HEK293T (cell line): ENCODE measurements at regions of chr11 and their contacts with region 1.

Region 1: DNA sequence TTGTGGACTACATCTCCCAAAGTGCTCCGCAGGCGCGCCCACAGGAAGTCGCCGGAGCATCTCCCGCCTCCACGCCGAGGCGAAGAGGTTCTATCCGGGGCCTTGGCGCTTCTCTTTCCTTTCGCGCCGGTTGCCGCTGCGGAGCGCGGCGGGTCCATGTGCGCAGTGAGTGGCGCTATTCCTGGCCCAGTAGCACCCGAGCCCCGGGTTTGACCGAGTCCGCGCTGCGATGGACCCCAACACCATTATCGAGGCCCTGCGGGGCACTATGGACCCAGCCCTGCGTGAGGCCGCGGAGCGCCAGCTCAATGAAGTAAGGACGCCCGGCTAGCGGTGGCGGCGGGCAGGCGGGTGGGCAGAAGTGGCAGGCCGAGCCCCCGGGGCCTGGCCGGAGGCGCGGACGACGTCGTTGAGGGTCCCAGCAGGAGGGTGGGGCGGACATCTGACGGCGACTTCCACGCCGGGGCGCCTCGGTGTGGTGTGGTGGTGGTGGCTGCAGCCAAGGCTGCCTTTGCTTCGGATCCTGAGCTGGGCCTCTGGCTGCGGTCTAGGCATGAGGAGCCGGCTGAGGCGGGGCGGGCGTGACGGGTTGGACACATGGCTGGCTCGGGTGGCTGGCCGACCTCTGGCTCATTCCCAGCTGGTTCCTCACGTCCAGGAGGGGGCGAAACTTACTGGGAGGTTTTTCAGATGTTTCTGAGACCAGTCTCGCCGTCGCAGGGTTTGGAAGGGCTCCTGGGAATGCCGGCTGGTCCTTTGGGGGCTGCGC is at the start of gene IPO7:
- DNase-seq: peak; percentile 88

Region 2: GRCh38 chr11:9314291-9315036 is 70.3 kb before region 1 on chr11 and contains the start of gene TMEM41B:
- CTCF ChIA-PET with region 1: interaction called, 3 read pairs
- POLR2A ChIA-PET with region 1: interaction called, 12 read pairs
- DNase-seq: peak; percentile 99

Region 3: GRCh38 chr11:9363954-9364912 is 20.5 kb before region 1 on chr11:
- CTCF ChIA-PET with region 1: no interaction called
- POLR2A ChIA-PET with region 1: interaction called, 26 read pairs
- DNase-seq: peak; percentile 85

Region 4: DNA sequence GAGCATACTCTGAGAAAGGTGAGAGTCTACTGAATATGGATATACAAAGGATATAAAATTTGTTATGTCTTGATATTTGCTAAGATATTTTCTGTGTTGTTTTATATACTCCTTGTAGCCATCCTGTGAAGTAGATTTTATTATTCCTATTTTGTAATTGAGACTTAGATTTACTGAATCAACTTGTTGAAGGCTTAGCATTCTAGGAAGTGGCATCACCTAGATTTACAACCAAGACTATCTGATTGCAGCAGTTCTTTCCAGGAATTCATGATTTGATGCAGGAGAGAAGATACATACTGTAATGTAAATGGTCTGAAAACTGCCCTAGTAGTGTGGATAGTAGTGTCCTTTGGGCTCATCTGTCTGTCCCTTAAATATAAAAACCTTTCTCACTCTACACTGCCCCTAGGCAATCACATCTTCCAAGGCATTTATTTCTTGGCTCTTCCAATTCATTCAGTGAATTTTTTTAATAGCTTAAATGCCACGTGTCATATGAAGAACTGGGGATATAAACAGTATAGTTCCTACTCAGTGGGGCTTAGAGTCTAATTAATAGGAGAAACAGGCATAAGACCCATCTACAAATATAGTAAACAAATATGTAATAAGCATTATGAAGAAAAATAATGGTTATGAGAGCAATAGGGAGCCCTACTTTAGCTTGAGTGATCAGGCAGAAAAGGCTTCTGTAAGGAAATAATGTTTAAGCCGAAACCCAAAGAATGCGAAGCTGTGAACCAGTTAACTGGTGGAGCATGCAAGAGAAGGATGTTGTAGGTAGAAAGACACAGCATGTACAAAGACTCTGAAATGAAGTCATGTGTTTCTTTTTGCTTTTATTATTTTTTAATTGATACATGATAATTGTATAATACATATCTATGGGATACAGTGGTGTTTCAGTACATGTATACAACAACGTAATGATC is 13.3 kb after region 1 on chr11:
- CTCF ChIA-PET with region 1: no interaction called
- POLR2A ChIA-PET with region 1: interaction called, 11 read pairs
- DNase-seq: no peak